Gastrocnemius medialis (tissue), 4 donors: ENCODE measurements at regions of chr13 and their contacts with region 1.

Region 1: GRCh38 chr13:113490496-113491417 is at the start of gene DCUN1D2:
- DNase-seq: peak; percentile 87 to 94
- ATAC-seq: peak; percentile 76 to 81
- H3K4me3 ChIP-seq: peak within 1 kb of the TSS; percentile 80 to 91 (median 88)
- H3K27ac ChIP-seq: peak within 1 kb of the TSS; percentile 89 to 94 (median 92)
- H3K4me1 ChIP-seq: peaks cover 58 to 70% of the 10 kb centered on the region in 2 donors
- H3K27me3 ChIP-seq: no peaks in the 10 kb centered on the region
- CTCF ChIP-seq: peak in 1 of 5 experiments; percentile 28
- POLR2A ChIP-seq: peak; percentile 94
- total RNA-seq, gene DCUN1D2: 45.1 to 63.6 (median 56.0) TPM

Region 2: GRCh38 chr13:113208424-113209335 is 282.1 kb before region 1 on chr13 and contains the start of gene PCID2:
- in situ Hi-C with region 1: no loop called
- intact Hi-C with region 1: loop called (anchors 2 kb)
- DNase-seq: peak; percentile 80 to 86
- ATAC-seq: peak; percentile 79 to 81
- H3K4me3 ChIP-seq: peak within 1 kb of the TSS; percentile 77 to 99 (median 90)
- H3K27ac ChIP-seq: peak within 1 kb of the TSS; percentile 94 to 100 (median 100)
- H3K4me1 ChIP-seq: peaks cover 74 to 75% of the 10 kb centered on the region in 2 donors
- H3K27me3 ChIP-seq: no peaks in the 10 kb centered on the region
- CTCF ChIP-seq: no peak
- POLR2A ChIP-seq: peak; percentile 77 to 83
- total RNA-seq, gene PCID2: 26.4 to 45.6 (median 28.0) TPM

Region 3: DNA sequence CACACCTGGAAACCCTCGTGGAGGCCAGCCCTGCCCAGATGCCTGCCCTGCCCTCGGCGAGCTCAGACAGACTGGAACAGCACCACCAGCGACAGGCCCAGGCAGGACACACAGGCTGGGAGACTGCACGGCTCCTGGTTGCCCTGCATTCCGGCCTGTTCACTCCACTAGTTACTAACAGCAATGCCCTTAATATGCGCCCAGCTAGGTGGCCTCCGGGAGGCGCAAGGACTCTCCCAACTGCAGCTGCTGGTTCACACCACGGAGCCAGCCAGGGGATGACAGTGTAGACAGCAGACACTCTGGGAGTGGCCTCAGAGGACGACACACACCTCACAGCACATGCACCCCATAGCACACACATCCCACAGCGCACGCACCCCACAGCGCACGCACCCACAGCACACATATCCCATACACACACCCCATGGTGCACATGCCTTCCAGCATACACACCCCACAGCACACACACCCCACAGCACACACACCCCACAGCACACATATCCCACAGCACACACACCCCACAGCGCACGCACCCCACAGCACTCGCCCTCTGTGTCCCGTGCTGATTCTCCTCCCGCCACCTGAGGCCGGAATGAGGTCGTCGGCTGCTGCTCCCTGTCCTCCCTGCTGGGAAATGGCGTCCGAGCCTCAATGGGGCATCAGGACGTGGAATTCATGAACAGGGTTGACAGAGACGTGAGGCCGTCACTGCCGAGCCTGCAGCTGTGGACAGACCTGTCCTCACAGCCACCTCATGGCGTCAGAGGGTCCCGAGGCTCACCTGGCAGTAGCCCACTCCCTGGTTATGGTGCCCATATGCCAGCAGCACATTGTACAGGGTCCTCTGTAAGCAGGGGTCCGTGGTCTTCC is 140.5 kb before region 1 on chr13:
- in situ Hi-C with region 1: no loop called
- intact Hi-C with region 1: no loop called
- DNase-seq: no peak
- ATAC-seq: no peak
- H3K4me3 ChIP-seq: no peak overlapping the region
- H3K27ac ChIP-seq: peak overlapping the region in 1 of 4 donors; percentile 61
- H3K4me1 ChIP-seq: peaks cover 0 to 9% of the 10 kb centered on the region in 2 donors
- H3K27me3 ChIP-seq: no peaks in the 10 kb centered on the region
- CTCF ChIP-seq: no peak
- POLR2A ChIP-seq: no peak

Region 4: GRCh38 chr13:113410472-113411201 is 80.1 kb before region 1 on chr13:
- in situ Hi-C with region 1: no loop called
- intact Hi-C with region 1: loop called (anchors 2 kb)
- DNase-seq: peak; percentile 92 to 96
- ATAC-seq: peak; percentile 64 to 65
- H3K4me3 ChIP-seq: peak overlapping the region; percentile 54 to 76 (median 64)
- H3K27ac ChIP-seq: peak overlapping the region; percentile 99 to 100 (median 100)
- H3K4me1 ChIP-seq: peaks cover 55 to 56% of the 10 kb centered on the region in 2 donors
- H3K27me3 ChIP-seq: no peaks in the 10 kb centered on the region
- CTCF ChIP-seq: no peak
- POLR2A ChIP-seq: peak; percentile 76 to 85